ENCODE measurements at regions of chr18 and their contacts with region 1.

Region 1: DNA sequence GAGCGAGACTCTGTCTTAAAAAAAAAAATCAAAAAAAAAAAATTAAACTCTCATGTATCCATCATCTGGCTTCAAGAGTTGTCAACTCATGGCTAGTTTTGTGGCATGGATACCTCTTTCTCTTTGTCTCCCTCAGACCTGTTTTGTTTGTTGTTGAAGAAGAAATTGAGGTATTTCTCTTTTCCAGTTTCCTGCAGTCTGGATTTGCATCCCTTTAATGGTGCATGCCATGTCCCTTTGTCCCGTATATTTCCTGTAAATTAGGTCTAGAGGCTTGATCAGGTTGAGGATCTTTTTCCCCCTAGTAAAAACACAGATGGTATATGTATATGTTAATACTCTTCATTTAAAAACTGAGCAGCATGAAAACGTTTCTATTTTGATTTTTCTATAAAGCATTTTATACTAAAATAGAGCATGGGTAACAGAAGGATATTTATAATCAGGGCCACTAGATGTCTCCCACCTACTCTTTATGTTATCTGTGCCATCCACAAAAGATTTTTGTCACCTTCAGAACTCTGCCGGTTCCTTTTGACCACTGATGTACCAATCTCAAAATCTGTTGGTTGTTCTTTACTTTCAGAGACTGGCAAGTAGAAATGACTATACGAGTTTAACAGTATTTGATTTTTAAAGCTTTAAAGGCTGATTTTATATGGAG is 80.1 kb downstream of the GALNT1 start:
- DNase-seq: no peak

Region 2: GRCh38 chr18:35564795-35565453 is 96.7 kb before region 1 on chr18:
- intact Hi-C with region 1: loop called in 1 of 2 experiments (anchors 5 kb)
- DNase-seq: no peak

Region 3: DNA sequence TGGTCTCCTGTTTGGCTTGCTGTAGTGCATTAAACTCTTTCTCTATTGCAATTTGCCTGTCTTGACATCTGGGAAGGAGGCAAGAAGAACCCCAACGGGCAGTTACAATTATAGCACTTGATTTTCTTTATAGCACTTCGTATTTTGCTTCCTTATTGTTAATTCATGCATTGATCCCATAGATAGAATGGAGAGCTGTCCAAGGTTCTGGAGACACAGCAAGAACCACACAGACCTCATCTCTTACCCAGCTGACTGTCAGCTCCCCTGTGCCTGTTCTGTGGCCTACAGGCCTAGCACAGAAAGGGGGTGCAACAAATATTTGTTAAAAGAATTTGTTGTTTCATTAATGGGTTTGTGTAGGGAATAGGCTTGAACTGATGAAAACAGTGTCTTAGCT is 114.3 kb after region 1 on chr18:
- intact Hi-C with region 1: no loop called
- DNase-seq: no peak

Region 4: DNA sequence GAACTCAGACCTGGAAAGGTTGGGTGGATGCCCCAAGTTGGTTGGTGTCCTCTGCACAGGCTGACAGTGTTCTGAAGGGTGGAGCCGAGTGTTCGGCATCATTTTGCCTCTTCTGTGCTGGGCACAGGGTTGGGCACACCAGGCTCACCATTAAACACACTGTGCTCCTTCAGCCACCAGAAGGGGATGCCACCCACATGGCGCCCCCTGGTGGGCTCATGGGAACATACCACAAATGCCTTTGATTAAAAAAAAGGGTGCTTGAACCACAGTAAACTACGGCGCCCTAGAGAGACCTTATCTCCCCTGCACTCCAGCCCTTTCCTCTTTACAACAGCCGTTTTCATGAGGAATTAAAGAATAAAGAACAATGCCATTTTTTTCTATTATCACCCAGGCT is 1814.6 kb after region 1 on chr18:
- intact Hi-C with region 1: loop called in 1 of 2 experiments (anchors 5 kb)
- DNase-seq: no peak